ENCODE measurements at regions of chr19 and their contacts with region 1.

Region 1: GRCh38 chr19:10864538-10864899 is 6.8 kb upstream of the CARM1 start:
- H3K4me3 ChIP-seq: no peak overlapping the region
- H3K27ac ChIP-seq: no peak overlapping the region
- H3K4me1 ChIP-seq: no peaks in the 10 kb centered on the region
- CTCF ChIP-seq: peak; percentile 87

Region 2: GRCh38 chr19:10717356-10718204 is 146.9 kb before region 1 on chr19 and contains the start of gene DNM2:
- CTCF ChIA-PET with region 1: interaction called, 47 read pairs
- POLR2A ChIA-PET with region 1: interaction called, 14 read pairs
- H3K4me3 ChIP-seq: peak within 1 kb of the TSS; percentile 97
- H3K27ac ChIP-seq: peak within 1 kb of the TSS; percentile 78
- H3K4me1 ChIP-seq: no peaks in the 10 kb centered on the region
- CTCF ChIP-seq: peak; percentile 92

Region 3: GRCh38 chr19:10846500-10847202 is 17.9 kb before region 1 on chr19:
- CTCF ChIA-PET with region 1: interaction called, 98 read pairs
- POLR2A ChIA-PET with region 1: interaction called, 5 read pairs
- H3K4me3 ChIP-seq: no peak overlapping the region
- H3K27ac ChIP-seq: no peak overlapping the region
- H3K4me1 ChIP-seq: no peaks in the 10 kb centered on the region
- CTCF ChIP-seq: no peak

Region 4: DNA sequence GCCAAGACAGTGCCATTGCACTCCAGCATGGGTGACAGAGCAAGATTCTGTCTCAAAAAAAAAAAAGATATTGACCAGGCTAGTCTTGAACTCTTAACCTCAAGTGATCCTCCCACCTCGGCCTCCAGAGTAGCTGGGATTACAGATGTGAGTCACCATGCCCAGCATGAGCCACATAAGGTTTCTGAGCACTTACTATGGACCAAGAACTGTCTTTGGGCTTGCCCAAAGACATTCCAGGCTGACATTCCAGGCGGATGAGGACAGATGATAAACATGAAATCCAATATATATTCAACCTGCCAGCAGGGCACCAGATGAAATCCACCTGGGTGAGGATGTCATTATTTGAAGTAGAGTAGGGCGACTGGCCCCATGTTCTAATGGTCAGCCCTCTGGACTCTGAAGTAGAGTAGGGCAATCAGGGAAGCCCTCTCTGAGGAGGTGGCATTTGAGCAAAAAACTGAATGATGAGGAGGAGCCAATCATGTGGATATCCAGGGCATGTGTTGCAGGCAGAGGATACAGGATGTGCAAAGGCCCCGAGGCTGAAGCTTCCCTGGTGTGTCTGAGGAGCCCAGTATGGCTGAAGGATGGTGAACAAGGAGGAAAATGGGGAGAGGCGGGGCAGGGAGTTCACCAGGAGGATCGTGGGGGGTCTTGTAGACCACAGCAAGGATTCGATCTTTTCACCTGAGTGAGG is 12.3 kb before region 1 on chr19:
- CTCF ChIA-PET with region 1: interaction called, 98 read pairs
- POLR2A ChIA-PET with region 1: interaction called, 7 read pairs
- H3K4me3 ChIP-seq: no peak overlapping the region
- H3K27ac ChIP-seq: no peak overlapping the region
- H3K4me1 ChIP-seq: no peaks in the 10 kb centered on the region
- CTCF ChIP-seq: no peak

Region 5: GRCh38 chr19:10876459-10877240 is 12.1 kb after region 1 on chr19:
- CTCF ChIA-PET with region 1: interaction called, 20 read pairs
- POLR2A ChIA-PET with region 1: no interaction called
- H3K4me3 ChIP-seq: no peak overlapping the region
- H3K27ac ChIP-seq: no peak overlapping the region
- H3K4me1 ChIP-seq: no peaks in the 10 kb centered on the region; the same call in 1 of the 2 replicates
- CTCF ChIP-seq: no peak

Region 6: GRCh38 chr19:11018179-11018578 is 153.7 kb after region 1 on chr19:
- CTCF ChIA-PET with region 1: no interaction called
- POLR2A ChIA-PET with region 1: no interaction called
- H3K4me3 ChIP-seq: no peak overlapping the region
- H3K27ac ChIP-seq: no peak overlapping the region
- H3K4me1 ChIP-seq: no peaks in the 10 kb centered on the region
- CTCF ChIP-seq: no peak